ENCODE measurements at regions of chr12 and their contacts with region 1.

Region 1: GRCh38 chr12:121793838-121794533 is 498 bp upstream of the RHOF start:
- DNase-seq: peak; percentile 97
- ATAC-seq: peak; percentile 53
- H3K4me3 ChIP-seq: peak overlapping the region; percentile 30 to 97 (median 92)
- H3K4me3 Mint-ChIP-seq: peak overlapping the region; percentile 88
- H3K27ac ChIP-seq: peak overlapping the region; percentile 59 to 100
- H3K27ac Mint-ChIP-seq: peak overlapping the region; percentile 90
- H3K4me1 ChIP-seq: peaks cover 50 to 72% of the 10 kb centered on the region in 2 donors
- H3K4me1 Mint-ChIP-seq: peaks cover 65% of the 10 kb centered on the region
- H3K27me3 ChIP-seq: no peaks in the 10 kb centered on the region
- H3K27me3 Mint-ChIP-seq: no peaks in the 10 kb centered on the region
- CTCF ChIP-seq: peak; percentile 95

Region 2: DNA sequence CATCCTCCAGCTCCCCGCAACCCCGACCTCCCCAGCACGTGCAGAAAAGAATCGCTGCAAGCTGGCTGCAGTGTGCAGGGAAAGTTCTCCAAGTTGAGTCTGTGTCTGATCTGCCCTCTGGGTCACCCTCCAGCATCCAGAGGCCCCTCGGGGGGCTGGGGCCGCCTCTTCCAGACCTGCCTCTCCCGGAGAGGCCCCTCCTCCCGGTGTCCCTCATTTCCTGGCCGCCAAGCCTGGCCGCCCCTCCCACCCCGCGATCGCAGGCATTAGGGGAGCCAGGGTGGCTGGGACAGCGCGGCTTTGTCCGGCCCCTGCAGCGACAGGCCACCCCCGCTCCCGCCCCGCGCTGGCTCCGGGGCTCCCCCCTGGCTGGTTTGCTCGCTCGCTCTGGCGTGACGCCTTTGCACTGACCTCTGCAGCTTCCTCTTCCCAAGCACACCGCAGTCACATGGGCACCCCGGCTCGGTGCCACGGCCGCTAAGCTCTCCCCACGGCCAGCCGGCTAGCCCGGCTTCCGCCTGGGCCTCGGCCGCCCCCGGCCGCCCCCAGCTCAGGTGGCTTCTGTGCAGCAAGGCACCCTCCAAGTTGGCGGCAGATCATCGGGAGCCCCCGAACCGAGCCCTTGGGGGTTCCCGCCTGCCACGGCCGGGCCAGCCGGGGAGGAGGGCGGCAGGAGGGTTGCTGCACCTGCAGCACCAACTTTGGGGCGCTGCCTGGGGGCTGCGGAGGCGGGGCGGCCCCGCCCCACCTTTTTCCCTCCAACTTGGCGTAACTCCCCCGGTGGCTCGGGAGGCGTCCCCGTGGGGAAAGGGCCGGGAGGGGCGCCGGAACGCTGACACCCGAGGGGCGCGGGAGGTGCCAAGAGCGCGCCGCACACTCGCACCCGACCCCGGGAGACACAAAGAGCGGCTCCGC is 256.8 kb before region 1 on chr12:
- CTCF ChIA-PET with region 1: interaction called, 4 read pairs
- POLR2A ChIA-PET with region 1: interaction called, 7 read pairs
- intact Hi-C with region 1: loop called (anchors 5 kb)
- DNase-seq: peak; percentile 92
- ATAC-seq: peak; percentile 49
- H3K4me3 ChIP-seq: peak overlapping the region; percentile 8 to 85 (median 66)
- H3K4me3 Mint-ChIP-seq: peak overlapping the region; percentile 94
- H3K27ac ChIP-seq: peak overlapping the region; percentile 92 to 97
- H3K27ac Mint-ChIP-seq: peak overlapping the region; percentile 93
- H3K4me1 ChIP-seq: peaks cover 50 to 56% of the 10 kb centered on the region in 2 donors
- H3K4me1 Mint-ChIP-seq: peaks cover 53% of the 10 kb centered on the region
- H3K27me3 ChIP-seq: no peaks in the 10 kb centered on the region
- H3K27me3 Mint-ChIP-seq: no peaks in the 10 kb centered on the region
- CTCF ChIP-seq: no peak

Region 3: GRCh38 chr12:121637231-121637914 is 156.6 kb before region 1 on chr12:
- CTCF ChIA-PET with region 1: no interaction called
- POLR2A ChIA-PET with region 1: no interaction called
- intact Hi-C with region 1: no loop called
- DNase-seq: peak; percentile 79
- ATAC-seq: peak; percentile 90
- H3K4me3 ChIP-seq: peak overlapping the region in 4 of 5 experiments; percentile 19 to 46 (median 37)
- H3K4me3 Mint-ChIP-seq: peak overlapping the region; percentile 67
- H3K27ac ChIP-seq: peak overlapping the region; percentile 86 to 89
- H3K27ac Mint-ChIP-seq: peak overlapping the region; percentile 92
- H3K4me1 ChIP-seq: peaks cover 29 to 40% of the 10 kb centered on the region in 2 donors
- H3K4me1 Mint-ChIP-seq: peaks cover 40% of the 10 kb centered on the region
- H3K27me3 ChIP-seq: no peaks in the 10 kb centered on the region
- H3K27me3 Mint-ChIP-seq: no peaks in the 10 kb centered on the region
- CTCF ChIP-seq: no peak

Region 4: DNA sequence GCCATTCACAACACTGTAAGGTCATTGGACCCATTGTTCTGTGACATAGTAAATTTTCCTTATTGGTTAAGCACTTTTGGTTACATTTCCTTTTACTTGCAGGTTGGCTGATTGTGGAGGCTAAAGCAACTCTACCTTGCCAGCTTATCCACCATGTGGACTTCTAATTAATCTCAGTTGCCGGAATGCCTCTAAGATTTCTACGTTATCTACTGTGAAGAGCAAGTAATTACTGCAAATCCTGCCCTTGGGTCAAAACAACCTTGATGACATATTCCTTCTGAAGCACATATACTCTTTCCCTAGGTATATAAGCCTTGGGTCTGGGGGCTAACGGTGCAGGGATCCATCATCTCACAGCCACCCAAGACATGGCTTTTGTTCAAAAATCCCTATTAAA is 105.0 kb before region 1 on chr12:
- CTCF ChIA-PET with region 1: interaction called, 155 read pairs
- POLR2A ChIA-PET with region 1: interaction called, 4 read pairs
- intact Hi-C with region 1: loop called (anchors 2 kb)
- DNase-seq: no peak
- ATAC-seq: no peak
- H3K4me3 ChIP-seq: no peak overlapping the region
- H3K4me3 Mint-ChIP-seq: no peak overlapping the region
- H3K27ac ChIP-seq: no peak overlapping the region
- H3K27ac Mint-ChIP-seq: peak overlapping the region; percentile 10
- H3K4me1 ChIP-seq: peaks cover 4 to 16% of the 10 kb centered on the region in 2 donors
- H3K4me1 Mint-ChIP-seq: peaks cover 8% of the 10 kb centered on the region
- H3K27me3 ChIP-seq: no peaks in the 10 kb centered on the region
- H3K27me3 Mint-ChIP-seq: no peaks in the 10 kb centered on the region
- CTCF ChIP-seq: no peak

Region 5: DNA sequence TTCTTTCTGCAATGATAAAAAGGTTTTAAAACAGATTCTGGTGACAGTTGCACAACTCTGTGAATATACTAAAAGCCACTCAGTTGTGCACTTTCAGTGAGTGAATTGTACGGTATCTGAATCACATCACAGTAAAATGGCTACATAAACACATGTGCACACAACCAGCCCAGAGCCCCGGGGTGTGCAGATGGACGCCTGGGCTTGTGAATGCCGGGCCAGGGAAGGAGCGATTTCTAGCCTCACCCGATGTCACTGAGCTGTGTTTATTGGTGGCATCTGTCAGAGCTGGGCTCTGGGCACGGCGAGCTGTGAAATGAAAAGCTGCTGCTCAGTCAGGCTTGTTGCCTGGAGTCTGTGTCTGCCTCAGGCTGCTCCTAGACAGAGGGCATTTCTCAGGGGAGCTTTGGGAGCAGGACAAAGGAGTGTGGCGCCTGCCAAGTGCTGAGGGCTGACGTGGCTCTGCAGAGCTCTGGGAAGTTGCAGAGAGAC is 26.4 kb before region 1 on chr12:
- CTCF ChIA-PET with region 1: interaction called, 1,947 read pairs
- POLR2A ChIA-PET with region 1: no interaction called
- intact Hi-C with region 1: no loop called
- DNase-seq: no peak
- ATAC-seq: no peak
- H3K4me3 ChIP-seq: no peak overlapping the region
- H3K4me3 Mint-ChIP-seq: no peak overlapping the region
- H3K27ac ChIP-seq: no peak overlapping the region
- H3K27ac Mint-ChIP-seq: no peak overlapping the region
- H3K4me1 ChIP-seq: no peaks in the 10 kb centered on the region
- H3K4me1 Mint-ChIP-seq: no peaks in the 10 kb centered on the region
- H3K27me3 ChIP-seq: no peaks in the 10 kb centered on the region
- H3K27me3 Mint-ChIP-seq: no peaks in the 10 kb centered on the region
- CTCF ChIP-seq: no peak

Region 6: GRCh38 chr12:121823101-121823726 is 29.2 kb after region 1 on chr12:
- CTCF ChIA-PET with region 1: interaction called, 1,947 read pairs
- POLR2A ChIA-PET with region 1: no interaction called
- intact Hi-C with region 1: no loop called
- DNase-seq: no peak
- ATAC-seq: no peak
- H3K4me3 ChIP-seq: no peak overlapping the region
- H3K4me3 Mint-ChIP-seq: no peak overlapping the region
- H3K27ac ChIP-seq: no peak overlapping the region
- H3K27ac Mint-ChIP-seq: no peak overlapping the region
- H3K4me1 ChIP-seq: no peaks in the 10 kb centered on the region
- H3K4me1 Mint-ChIP-seq: no peaks in the 10 kb centered on the region
- H3K27me3 ChIP-seq: no peaks in the 10 kb centered on the region
- H3K27me3 Mint-ChIP-seq: no peaks in the 10 kb centered on the region
- CTCF ChIP-seq: no peak

Region 7: DNA sequence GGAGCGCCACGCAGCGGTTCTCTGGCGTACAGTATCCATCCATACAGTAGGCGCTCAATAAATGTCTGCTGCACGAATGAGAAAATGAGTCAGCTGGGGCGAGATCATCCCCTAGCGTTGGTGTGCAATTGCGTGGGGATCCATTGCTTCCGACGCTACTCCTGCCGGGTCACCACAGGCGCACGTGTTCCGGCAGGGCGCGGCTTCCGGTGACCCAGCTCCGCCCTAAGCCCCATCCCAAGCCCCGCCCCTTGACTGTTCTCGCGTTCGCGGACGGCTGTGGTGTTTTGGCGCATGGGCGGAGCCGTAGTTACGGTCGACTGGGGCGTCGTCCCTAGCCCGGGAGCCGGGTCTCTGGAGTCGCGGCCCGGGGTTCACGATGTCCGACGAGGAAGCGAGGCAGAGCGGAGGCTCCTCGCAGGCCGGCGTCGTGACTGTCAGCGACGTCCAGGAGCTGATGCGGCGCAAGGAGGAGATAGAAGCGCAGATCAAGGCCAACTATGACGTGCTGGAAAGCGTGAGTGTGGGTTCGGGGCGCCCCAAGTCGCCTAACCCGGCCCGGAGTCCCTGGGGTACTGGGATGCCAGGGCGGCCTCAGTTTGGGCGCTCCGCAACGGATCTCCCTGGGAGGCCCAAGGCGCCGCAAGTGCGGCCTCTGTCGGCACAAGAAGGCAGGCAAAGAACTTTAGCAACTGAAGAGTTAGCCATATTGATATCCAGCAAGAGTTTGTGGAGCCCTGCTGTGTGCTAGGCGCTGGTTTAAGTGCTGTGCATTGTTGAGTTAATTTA is 94.7 kb after region 1 on chr12 and contains the start of gene PSMD9:
- CTCF ChIA-PET with region 1: interaction called, 42 read pairs
- POLR2A ChIA-PET with region 1: interaction called, 3 read pairs
- intact Hi-C with region 1: loop called (anchors 1 kb)
- DNase-seq: peak; percentile 98
- ATAC-seq: peak; percentile 96
- H3K4me3 ChIP-seq: peak within 1 kb of the TSS; percentile 70 to 92 (median 78)
- H3K4me3 Mint-ChIP-seq: peak within 1 kb of the TSS; percentile 99
- H3K27ac ChIP-seq: peak within 1 kb of the TSS; percentile 86 to 95
- H3K27ac Mint-ChIP-seq: peak within 1 kb of the TSS; percentile 99
- H3K4me1 ChIP-seq: peaks cover 15 to 19% of the 10 kb centered on the region in 2 donors
- H3K4me1 Mint-ChIP-seq: peaks cover 32% of the 10 kb centered on the region
- H3K27me3 ChIP-seq: peaks cover 0 to 5% (median 0%) of the 10 kb centered on the region in 4 experiments
- H3K27me3 Mint-ChIP-seq: no peaks in the 10 kb centered on the region
- CTCF ChIP-seq: peak; percentile 68
- total RNA-seq, gene PSMD9: 37.1 and 38.2 TPM in 2 replicates